ENCODE measurements at regions of chr5 and their contacts with region 1.

Region 1: GRCh38 chr5:121962347-121962670 is 534 bp downstream of the SRFBP1 start:
- DNase-seq: no peak
- H3K4me3 Mint-ChIP-seq: peak overlapping the region; percentile 96
- H3K27ac Mint-ChIP-seq: peak overlapping the region; percentile 97
- H3K4me1 Mint-ChIP-seq: peaks cover 26% of the 10 kb centered on the region
- H3K27me3 Mint-ChIP-seq: peaks cover 6% of the 10 kb centered on the region

Region 2: GRCh38 chr5:120368923-120369715 is 1593.2 kb before region 1 on chr5:
- intact Hi-C with region 1: no loop called
- DNase-seq: no peak
- H3K4me3 Mint-ChIP-seq: no peak overlapping the region
- H3K27ac Mint-ChIP-seq: no peak overlapping the region
- H3K4me1 Mint-ChIP-seq: no peaks in the 10 kb centered on the region
- H3K27me3 Mint-ChIP-seq: no peaks in the 10 kb centered on the region

Region 3: DNA sequence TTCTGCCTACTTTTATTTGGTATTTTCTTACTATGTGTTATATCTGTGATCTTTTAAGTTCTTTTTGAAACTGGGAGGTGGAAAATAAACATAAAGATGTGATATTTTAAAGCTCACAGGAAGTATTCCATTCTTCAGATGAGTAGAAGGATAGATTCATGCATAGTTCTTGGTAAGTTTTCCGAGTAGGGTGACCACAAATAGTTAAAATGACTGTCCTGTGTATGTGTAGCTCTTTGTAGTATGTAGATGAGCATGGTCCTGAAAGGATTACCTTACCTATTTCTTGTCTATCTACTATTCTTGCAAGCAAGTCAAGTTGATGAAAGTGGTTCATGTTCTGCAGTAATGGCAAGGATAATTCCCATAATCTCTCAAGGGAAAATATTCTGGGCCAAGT is 47.1 kb after region 1 on chr5:
- intact Hi-C with region 1: loop called (anchors 1 kb)
- DNase-seq: no peak
- H3K4me3 Mint-ChIP-seq: no peak overlapping the region
- H3K27ac Mint-ChIP-seq: peak overlapping the region; percentile 38
- H3K4me1 Mint-ChIP-seq: peaks cover 18% of the 10 kb centered on the region
- H3K27me3 Mint-ChIP-seq: no peaks in the 10 kb centered on the region

Region 4: DNA sequence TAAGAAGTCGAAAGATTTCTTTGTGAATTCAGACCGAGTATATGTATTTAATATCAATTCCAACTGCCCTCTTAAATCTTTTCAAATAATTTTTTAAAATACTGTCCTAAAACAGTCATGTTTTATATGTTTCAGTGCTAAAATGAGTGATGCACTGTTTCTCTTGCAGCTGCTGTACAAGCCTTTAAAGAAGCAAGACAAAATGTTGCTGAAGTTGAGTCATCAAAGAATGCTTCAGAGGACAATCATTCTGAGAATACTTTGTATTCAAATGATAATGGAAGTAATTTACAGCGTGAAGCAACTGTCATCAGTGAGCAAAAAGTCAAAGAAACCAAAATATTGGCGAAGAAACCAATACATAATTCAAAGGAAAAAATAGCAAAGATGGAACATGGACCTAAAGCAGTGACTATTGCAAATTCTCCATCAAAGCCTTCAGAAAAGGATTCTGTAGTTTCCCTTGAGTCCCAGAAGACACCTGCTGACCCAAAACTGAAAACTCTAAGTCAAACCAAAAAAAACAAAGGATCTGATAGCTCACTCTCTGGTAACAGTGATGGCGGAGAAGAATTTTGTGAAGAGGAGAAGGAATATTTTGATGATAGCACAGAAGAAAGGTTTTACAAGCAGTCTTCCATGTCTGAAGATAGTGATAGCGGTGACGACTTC is 57.7 kb after region 1 on chr5:
- intact Hi-C with region 1: loop called (anchors 1 kb)
- DNase-seq: no peak
- H3K4me3 Mint-ChIP-seq: peak overlapping the region; percentile 57
- H3K27ac Mint-ChIP-seq: peak overlapping the region; percentile 80
- H3K4me1 Mint-ChIP-seq: peaks cover 7% of the 10 kb centered on the region
- H3K27me3 Mint-ChIP-seq: no peaks in the 10 kb centered on the region

Region 5: GRCh38 chr5:122076664-122077365 is 114.5 kb after region 1 on chr5:
- intact Hi-C with region 1: loop called (anchors 2 kb)
- DNase-seq: peak; percentile 79
- H3K4me3 Mint-ChIP-seq: peak overlapping the region; percentile 85
- H3K27ac Mint-ChIP-seq: peak overlapping the region; percentile 65
- H3K4me1 Mint-ChIP-seq: peaks cover 13% of the 10 kb centered on the region
- H3K27me3 Mint-ChIP-seq: peaks cover 64% of the 10 kb centered on the region

Region 6: GRCh38 chr5:122101636-122102285 is 139.5 kb after region 1 on chr5:
- intact Hi-C with region 1: loop called (anchors 5 kb)
- DNase-seq: no peak
- H3K4me3 Mint-ChIP-seq: no peak overlapping the region
- H3K27ac Mint-ChIP-seq: no peak overlapping the region
- H3K4me1 Mint-ChIP-seq: no peaks in the 10 kb centered on the region
- H3K27me3 Mint-ChIP-seq: no peaks in the 10 kb centered on the region

Measured in activated CD4-positive, alpha-beta T cell treated with anti-CD3 and anti-CD28 coated beads, Interleukin-2, amount 10 ng/mL, durations not matched to agents 24 days and 14 days (primary cell).